PC-9 (cell line): ENCODE measurements at regions of chr10 and their contacts with region 1.

Region 1: GRCh38 chr10:71766702-71767419 is 6.5 kb downstream of the VSIR start:
- DNase-seq: peak; percentile 95 to 99
- H3K4me3 ChIP-seq: peak overlapping the region; percentile 28; the same call in 1 of the 2 replicates
- H3K27ac ChIP-seq: peak overlapping the region; percentile 88
- H3K4me1 ChIP-seq: peaks cover 91% of the 10 kb centered on the region
- H3K27me3 ChIP-seq: no peaks in the 10 kb centered on the region
- CTCF ChIP-seq: no peak

Region 2: GRCh38 chr10:71343392-71343773 is 423.5 kb before region 1 on chr10:
- CTCF ChIA-PET with region 1: no interaction called
- POLR2A ChIA-PET with region 1: interaction called, 6 read pairs
- intact Hi-C with region 1: loop called (anchors 1 kb)
- DNase-seq: peak; percentile 75 to 98
- H3K4me3 ChIP-seq: no peak overlapping the region
- H3K27ac ChIP-seq: peak overlapping the region; percentile 81
- H3K4me1 ChIP-seq: peaks cover 86% of the 10 kb centered on the region
- H3K27me3 ChIP-seq: no peaks in the 10 kb centered on the region
- CTCF ChIP-seq: no peak

Region 3: GRCh38 chr10:71729161-71729636 is 37.7 kb before region 1 on chr10:
- CTCF ChIA-PET with region 1: no interaction called
- POLR2A ChIA-PET with region 1: no interaction called
- intact Hi-C with region 1: loop called (anchors 1 kb)
- DNase-seq: peak; percentile 92 to 95
- H3K4me3 ChIP-seq: no peak overlapping the region
- H3K27ac ChIP-seq: peak overlapping the region; percentile 40
- H3K4me1 ChIP-seq: peaks cover 56% of the 10 kb centered on the region
- H3K27me3 ChIP-seq: no peaks in the 10 kb centered on the region
- CTCF ChIP-seq: no peak

Region 4: GRCh38 chr10:71860243-71861029 is 93.6 kb after region 1 on chr10:
- CTCF ChIA-PET with region 1: interaction called, 4 read pairs
- POLR2A ChIA-PET with region 1: no interaction called
- intact Hi-C with region 1: loop called (anchors 2 kb)
- DNase-seq: peak; percentile 92 to 96
- H3K4me3 ChIP-seq: no peak overlapping the region
- H3K27ac ChIP-seq: peak overlapping the region; percentile 99
- H3K4me1 ChIP-seq: peaks cover 60% of the 10 kb centered on the region
- H3K27me3 ChIP-seq: no peaks in the 10 kb centered on the region
- CTCF ChIP-seq: no peak

Region 5: DNA sequence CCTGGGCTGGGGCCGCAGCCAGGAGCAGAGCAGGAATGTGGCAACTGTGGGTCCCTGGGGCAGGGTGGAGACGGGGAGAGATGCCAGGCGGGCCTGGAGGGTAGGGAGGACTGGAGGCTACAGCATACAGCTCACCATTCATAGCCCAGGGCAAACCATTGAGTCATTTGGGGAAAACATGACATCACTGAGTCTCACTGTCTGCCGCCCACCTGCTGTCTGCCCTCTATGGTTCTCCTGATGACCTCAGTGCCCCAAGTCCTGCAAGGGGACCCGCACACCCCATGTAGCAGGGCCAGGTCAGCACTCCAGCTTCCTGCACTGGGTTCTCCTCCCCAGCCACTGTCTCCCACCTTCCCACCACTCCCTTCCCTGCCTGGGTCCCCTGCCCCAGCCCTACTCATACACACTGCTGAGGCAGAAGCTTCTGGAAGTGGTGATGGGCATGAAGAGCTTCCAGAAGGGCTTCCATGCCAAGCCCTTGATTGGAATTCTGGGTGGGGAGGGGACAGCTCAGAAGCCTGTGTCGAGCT is 207.7 kb after region 1 on chr10:
- CTCF ChIA-PET with region 1: no interaction called
- POLR2A ChIA-PET with region 1: no interaction called
- intact Hi-C with region 1: loop called (anchors 2 kb)
- DNase-seq: peak; percentile 69 to 91
- H3K4me3 ChIP-seq: no peak overlapping the region
- H3K27ac ChIP-seq: peak overlapping the region; percentile 56
- H3K4me1 ChIP-seq: peaks cover 37% of the 10 kb centered on the region
- H3K27me3 ChIP-seq: no peaks in the 10 kb centered on the region
- CTCF ChIP-seq: no peak